Activated CD4-positive, alpha-beta T cell treated with anti-CD3 and anti-CD28 coated beads, Interleukin-2, amount 10 ng/mL, durations not matched to agents 24 days and 14 days (primary cell): ENCODE measurements at regions of chr3 and their contacts with region 1.

Region 1: DNA sequence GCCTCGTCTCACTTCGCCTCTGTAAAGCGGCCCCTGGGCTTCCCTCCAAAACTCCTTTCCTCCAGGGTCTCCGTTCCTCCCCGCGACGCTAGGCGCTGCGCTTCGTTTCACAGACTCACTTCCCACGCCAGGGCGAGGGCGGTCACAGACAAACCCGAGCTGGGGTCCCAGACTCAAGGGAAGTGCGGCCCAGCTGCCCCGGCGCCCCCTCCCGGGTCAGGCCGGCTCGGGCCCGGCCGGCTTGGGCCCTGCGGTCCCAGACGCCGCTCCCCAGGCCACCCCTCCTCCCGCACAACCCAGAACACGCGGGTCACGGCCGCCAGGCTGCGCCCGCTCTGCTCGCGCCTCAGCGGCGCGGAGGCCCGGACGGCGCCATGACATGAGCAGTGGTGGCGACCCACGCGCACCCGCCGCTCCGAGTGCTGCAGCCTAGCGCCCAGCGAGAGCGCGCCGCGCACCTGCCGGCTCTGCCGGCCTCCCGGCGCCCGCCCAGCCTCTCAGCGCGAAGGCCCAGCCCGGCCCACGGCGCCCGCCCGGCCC is 547 bp downstream of the NUP210 start:
- DNase-seq: peak; percentile 89
- H3K4me3 Mint-ChIP-seq: peak overlapping the region; percentile 92
- H3K27ac Mint-ChIP-seq: peak overlapping the region; percentile 93
- H3K4me1 Mint-ChIP-seq: peaks cover 58% of the 10 kb centered on the region
- H3K27me3 Mint-ChIP-seq: peaks cover 3% of the 10 kb centered on the region

Region 2: DNA sequence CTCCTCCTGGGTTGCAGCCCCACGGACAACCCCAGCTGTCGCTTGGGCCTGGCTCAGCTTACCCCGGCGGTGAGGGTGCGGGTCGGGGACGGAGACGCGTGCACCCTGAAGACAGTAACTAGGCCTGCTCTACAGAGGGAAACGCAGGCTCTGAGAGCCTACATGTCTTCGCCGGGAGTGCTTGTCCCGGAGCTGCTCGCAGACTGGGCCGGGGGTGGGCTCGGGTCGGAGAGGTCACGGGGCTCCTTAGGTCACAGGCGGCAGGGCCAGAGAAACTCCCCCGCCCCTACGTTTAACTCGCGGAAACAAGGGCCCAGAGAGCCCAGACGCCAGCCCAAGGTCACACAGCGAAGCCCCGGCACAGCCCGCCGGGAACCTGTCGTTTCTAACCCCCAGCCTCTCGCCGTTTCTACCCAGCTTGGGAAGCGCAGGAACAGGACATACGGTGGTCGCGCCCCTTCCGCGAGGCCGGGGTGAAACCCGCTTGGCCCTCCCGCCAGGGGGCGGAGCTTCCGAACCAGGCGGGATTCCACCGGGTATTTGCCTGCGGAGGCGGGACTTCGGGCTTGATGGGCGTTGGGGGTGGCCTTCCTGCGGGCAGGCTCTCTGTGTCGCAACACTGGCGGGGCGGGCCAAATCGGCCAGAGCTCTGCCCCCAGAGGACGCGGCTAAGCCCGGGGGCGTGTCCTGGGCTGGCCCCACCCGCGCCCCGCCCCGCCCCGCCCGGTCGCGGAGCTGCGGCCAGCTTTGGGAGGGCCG is 60.2 kb after region 1 on chr3 and contains the start of gene HDAC11:
- intact Hi-C with region 1: loop called (anchors 1 kb)
- DNase-seq: peak; percentile 100
- H3K4me3 Mint-ChIP-seq: peak within 1 kb of the TSS; percentile 91
- H3K27ac Mint-ChIP-seq: peak within 1 kb of the TSS; percentile 88
- H3K4me1 Mint-ChIP-seq: peaks cover 8% of the 10 kb centered on the region
- H3K27me3 Mint-ChIP-seq: peaks cover 10% of the 10 kb centered on the region
- total RNA-seq, gene HDAC11: 1.5 and 2.1 TPM in 2 replicates